Sigmoid colon (tissue), 7 donors: ENCODE measurements at regions of chr7 and their contacts with region 1.

Region 1: GRCh38 chr7:139075031-139075652 is 34.4 kb downstream of the ZC3HAV1 start:
- DNase-seq: peak; percentile 86
- H3K4me3 ChIP-seq: no peak overlapping the region
- H3K27ac ChIP-seq: peak overlapping the region in 2 of 4 donors; percentile 35 to 46
- H3K4me1 ChIP-seq: peaks cover 0 to 3% (median 0%) of the 10 kb centered on the region in 4 donors
- H3K27me3 ChIP-seq: no peaks in the 10 kb centered on the region
- CTCF ChIP-seq: peak; percentile 53 to 80 (median 60)
- EP300 ChIP-seq: no peak
- POLR2A ChIP-seq: no peak

Region 2: GRCh38 chr7:139016931-139017511 is 58.1 kb before region 1 on chr7:
- intact Hi-C with region 1: loop called (anchors 5 kb)
- DNase-seq: peak; percentile 74
- H3K4me3 ChIP-seq: no peak overlapping the region
- H3K27ac ChIP-seq: no peak overlapping the region
- H3K4me1 ChIP-seq: peaks cover 0 to 4% (median 0%) of the 10 kb centered on the region in 4 donors
- H3K27me3 ChIP-seq: no peaks in the 10 kb centered on the region
- CTCF ChIP-seq: peak in 2 of 4 experiments; percentile 14 to 45
- EP300 ChIP-seq: no peak
- POLR2A ChIP-seq: no peak

Region 3: DNA sequence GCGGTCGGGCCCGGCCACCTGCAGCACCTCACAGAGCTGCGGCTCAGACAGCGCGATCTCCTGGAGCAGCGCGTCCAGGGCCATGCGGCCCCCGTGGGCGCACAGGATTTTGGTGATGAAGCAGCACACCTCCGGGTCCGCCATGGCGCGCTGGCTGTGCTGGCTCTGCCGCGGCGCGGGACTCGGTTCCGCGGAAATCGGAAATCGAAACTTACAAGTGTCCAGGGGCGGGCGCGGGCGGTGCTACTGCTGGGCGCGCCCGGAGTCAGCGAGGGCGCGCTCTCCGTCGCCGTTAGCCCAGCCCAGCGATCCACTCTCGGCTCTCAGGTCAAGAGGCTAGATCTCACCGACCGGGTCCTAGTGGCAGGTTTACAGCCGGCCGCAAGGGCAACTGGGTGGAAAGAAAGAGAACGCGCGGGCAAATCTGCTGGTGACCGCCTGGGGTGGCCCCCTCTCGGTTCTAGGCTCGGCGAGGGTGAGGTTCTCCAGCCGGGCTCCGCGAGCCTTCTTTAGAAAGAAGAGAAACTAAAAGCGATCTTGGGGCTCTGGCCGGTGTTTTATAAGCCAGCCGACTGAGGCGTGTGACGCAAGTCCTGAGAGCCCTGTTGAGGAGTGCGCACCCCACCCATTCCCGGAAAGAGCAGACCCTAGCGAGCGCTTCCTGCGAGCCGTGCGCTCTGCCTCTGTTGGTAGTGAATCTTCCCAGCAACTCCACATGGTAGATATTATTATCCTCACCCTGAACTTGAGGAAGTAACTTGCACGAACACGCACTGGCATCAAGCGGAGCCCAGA is 34.2 kb after region 1 on chr7 and contains the start of gene ZC3HAV1:
- intact Hi-C with region 1: loop called (anchors 2 kb)
- DNase-seq: peak; percentile 96
- H3K4me3 ChIP-seq: peak within 1 kb of the TSS; percentile 70 to 84 (median 74)
- H3K27ac ChIP-seq: peak within 1 kb of the TSS; percentile 88 to 93 (median 92)
- H3K4me1 ChIP-seq: peaks cover 0 to 33% (median 27%) of the 10 kb centered on the region in 4 donors
- H3K27me3 ChIP-seq: no peaks in the 10 kb centered on the region
- CTCF ChIP-seq: no peak
- EP300 ChIP-seq: no peak
- POLR2A ChIP-seq: peak; percentile 42 to 52
- total RNA-seq, gene ZC3HAV1: 23.4 to 29.1 (median 26.1) TPM

Region 4: DNA sequence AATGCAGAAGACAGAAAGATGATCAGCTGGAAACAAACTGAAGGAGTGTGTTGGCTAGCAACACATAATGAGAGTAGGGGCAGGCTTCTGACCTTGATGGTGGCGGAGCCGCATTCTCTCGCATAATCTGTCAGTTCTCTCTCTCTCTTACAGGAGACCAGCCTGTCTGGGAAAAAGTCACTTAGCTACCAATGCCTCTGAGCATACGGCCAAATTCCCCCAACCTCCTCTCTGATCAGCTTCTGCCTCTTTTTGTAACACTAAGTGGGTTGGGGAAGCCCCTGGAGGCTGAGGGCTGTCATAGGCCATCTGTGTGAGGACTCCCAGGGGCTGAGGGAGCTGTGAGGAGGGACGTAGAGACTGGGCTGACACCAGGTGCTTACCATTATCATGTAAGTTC is 598.1 kb after region 1 on chr7:
- intact Hi-C with region 1: no loop called
- DNase-seq: no peak
- H3K4me3 ChIP-seq: no peak overlapping the region
- H3K27ac ChIP-seq: peak overlapping the region in 3 of 4 donors; percentile 28 to 45 (median 34)
- H3K4me1 ChIP-seq: no peaks in the 10 kb centered on the region
- H3K27me3 ChIP-seq: no peaks in the 10 kb centered on the region
- CTCF ChIP-seq: no peak
- EP300 ChIP-seq: no peak
- POLR2A ChIP-seq: no peak